ENCODE measurements at regions of chr15 and their contacts with region 1.

Region 1: GRCh38 chr15:91049378-91050127 is 27.2 kb upstream of the VPS33B start:
- DNase-seq: peak; percentile 47 to 51
- H3K4me3 ChIP-seq: no peak overlapping the region
- H3K27ac ChIP-seq: no peak overlapping the region
- H3K4me1 ChIP-seq: no peaks in the 10 kb centered on the region
- H3K27me3 ChIP-seq: peaks cover 35% of the 10 kb centered on the region
- CTCF ChIP-seq: peak; percentile 71

Region 2: DNA sequence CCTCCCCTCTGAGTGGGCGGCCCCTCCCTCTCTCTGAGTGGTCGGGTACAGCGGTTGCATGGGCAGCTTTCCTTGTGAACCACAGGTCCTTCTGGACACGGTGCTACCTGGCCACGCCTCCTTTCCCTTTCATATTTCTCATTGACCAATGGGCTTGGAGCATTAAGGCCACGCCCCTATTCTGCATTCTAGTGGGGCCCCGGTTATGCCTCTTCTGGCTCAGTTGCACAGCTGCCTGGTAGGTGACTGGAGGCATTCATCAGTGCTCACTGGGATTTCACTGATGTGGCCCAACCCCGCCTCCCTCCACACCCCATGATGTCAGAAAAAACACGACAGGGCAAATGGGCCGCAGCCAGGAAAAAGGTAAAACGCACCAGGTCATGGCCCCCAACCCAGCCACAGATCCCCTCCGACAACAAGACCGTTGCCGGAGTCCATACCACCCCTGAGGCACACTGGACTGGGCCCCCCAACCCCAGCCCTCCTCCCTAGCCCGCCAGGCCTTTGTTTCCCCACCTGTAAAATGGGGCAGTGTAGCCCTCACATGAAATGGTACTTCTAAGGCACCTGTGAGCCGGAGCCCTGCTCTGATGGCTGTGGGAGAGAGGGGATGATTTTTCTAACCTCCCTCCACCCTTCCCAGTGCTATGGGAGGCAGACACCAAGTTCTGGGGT is 757.7 kb before region 1 on chr15:
- CTCF ChIA-PET with region 1: no interaction called
- POLR2A ChIA-PET with region 1: no interaction called
- intact Hi-C with region 1: loop called (anchors 1 kb)
- DNase-seq: peak; percentile 15 to 47
- H3K4me3 ChIP-seq: no peak overlapping the region
- H3K27ac ChIP-seq: no peak overlapping the region
- H3K4me1 ChIP-seq: peaks cover 4% of the 10 kb centered on the region; the same call in 1 of the 2 replicates
- H3K27me3 ChIP-seq: no peaks in the 10 kb centered on the region
- CTCF ChIP-seq: no peak

Region 3: GRCh38 chr15:90902040-90902839 is 147.3 kb before region 1 on chr15:
- CTCF ChIA-PET with region 1: no interaction called
- POLR2A ChIA-PET with region 1: no interaction called
- intact Hi-C with region 1: loop called (anchors 1 kb)
- DNase-seq: peak; percentile 60 to 75
- H3K4me3 ChIP-seq: peak overlapping the region; percentile 60
- H3K27ac ChIP-seq: peak overlapping the region; percentile 25; the same call in 1 of the 2 replicates
- H3K4me1 ChIP-seq: peaks cover 18% of the 10 kb centered on the region
- H3K27me3 ChIP-seq: no peaks in the 10 kb centered on the region
- CTCF ChIP-seq: peak; percentile 69

Region 4: DNA sequence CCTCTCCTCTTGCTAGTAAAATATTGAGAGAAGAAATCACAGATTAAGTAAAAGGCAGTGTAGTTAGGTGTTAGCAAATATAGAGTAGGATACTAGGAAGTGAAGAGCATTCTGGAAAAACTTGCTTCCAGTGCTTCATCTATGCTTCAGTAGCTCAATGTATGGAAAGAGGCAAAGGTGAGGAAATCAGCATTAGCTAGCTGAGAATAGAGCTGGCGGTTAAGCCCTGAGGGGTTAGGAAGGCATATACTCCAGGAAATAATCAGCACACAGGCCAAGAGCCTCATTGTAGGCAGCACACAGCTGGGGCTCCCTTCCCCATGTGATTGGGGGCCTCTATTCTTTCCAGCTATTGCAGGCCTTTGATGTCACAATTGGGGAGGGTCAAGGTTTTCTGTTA is 81.1 kb before region 1 on chr15:
- CTCF ChIA-PET with region 1: interaction called, 10 read pairs
- POLR2A ChIA-PET with region 1: no interaction called
- intact Hi-C with region 1: no loop called
- DNase-seq: no peak
- H3K4me3 ChIP-seq: no peak overlapping the region
- H3K27ac ChIP-seq: no peak overlapping the region; the same call in 1 of the 2 replicates
- H3K4me1 ChIP-seq: no peaks in the 10 kb centered on the region
- H3K27me3 ChIP-seq: no peaks in the 10 kb centered on the region
- CTCF ChIP-seq: no peak